GM18951 (cell line): ENCODE measurements at regions of chr22 and their contacts with region 1.

Region 1: GRCh38 chr22:37316875-37317371 is 34.6 kb downstream of the CYTH4 start:
- POLR2A ChIP-seq: no peak

Region 2: GRCh38 chr22:36901411-36902142 is 415.3 kb before region 1 on chr22:
- in situ Hi-C with region 1: no loop called
- POLR2A ChIP-seq: no peak

Region 3: GRCh38 chr22:36925388-36926290 is 391.3 kb before region 1 on chr22:
- in situ Hi-C with region 1: no loop called
- POLR2A ChIP-seq: no peak

Region 4: DNA sequence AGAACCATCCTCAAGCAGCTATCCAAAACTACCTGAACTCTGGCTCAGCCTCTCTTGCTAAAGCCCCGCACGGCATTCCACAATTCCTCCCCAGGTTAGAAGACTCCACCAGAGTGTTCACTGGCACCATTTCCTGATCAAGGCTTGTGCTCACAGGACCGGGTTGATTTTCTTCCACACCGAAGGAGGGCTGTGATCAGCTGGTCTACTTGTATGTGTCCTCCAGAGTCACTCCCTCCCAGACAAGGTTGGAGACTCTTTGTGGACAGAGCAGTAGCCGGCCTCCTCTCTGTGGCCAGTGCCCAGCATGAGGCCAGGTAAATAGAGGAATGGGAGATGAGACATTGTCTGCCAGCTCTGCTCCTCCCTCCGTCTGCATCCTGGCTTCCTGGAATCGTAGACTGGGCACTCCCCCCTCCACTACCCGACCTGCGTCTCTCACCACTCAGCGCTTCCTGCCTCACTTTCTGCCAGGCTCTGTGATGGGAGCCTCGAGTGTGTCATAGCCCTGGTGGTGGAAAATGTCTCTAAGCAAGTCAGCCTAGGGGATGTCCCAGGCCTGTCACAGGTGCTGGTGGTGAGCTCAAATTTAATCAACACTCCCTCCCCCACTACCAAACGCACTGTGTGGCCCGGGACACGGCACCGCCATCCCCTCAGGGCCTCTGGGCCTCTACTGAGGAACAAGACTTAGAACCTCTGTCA is 194.9 kb before region 1 on chr22:
- in situ Hi-C with region 1: no loop called
- POLR2A ChIP-seq: peak; percentile 34

Region 5: GRCh38 chr22:37431801-37432707 is 115.1 kb after region 1 on chr22:
- in situ Hi-C with region 1: loop called (anchors 10 kb)
- POLR2A ChIP-seq: no peak